Posterior vena cava (tissue), 2 donors: ENCODE measurements at regions of chr3 and their contacts with region 1.

Region 1: DNA sequence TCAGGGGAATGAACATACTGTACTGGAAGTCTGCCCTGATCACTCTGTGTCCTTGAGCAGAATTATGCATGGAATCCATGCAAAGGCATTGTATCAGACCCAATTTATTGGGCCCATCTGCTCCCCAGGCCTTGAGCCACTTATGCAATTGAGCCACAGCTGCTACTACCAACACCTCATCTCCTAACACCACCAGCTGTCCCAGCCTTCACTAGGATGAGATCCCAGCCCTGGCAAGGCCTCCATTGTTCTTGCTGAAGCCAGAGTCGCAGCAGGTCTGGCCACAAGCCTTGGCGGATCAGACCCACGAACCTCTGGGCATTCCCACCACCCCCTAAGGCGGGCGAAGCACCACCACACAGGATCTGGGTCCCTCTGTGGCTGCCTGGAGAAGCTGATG is 9.2 kb upstream of the NME9 start:
- DNase-seq: no peak

Region 2: DNA sequence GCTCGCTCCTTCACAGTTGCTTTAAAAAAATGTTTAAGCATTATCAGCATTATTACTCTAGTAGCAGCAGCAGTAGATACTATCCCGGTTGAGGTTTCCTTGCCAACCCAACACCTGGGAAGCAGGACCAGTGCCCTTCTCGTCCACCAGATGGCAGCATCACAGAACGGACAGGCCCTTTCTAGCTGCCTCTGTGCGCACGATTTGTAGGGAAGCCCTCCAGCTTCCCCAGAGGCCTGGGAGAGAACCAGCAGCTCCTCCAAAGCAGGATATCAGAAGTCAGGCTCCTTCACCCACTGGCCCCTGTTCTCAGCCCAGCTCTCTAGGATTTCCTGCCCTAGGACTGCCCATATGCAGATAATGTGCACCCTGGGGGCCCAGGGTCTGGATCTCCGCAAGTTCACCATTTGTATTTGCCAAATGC is 78.8 kb after region 1 on chr3:
- intact Hi-C with region 1: loop called (anchors 5 to 10 kb)
- DNase-seq: peak; percentile 90

Region 3: DNA sequence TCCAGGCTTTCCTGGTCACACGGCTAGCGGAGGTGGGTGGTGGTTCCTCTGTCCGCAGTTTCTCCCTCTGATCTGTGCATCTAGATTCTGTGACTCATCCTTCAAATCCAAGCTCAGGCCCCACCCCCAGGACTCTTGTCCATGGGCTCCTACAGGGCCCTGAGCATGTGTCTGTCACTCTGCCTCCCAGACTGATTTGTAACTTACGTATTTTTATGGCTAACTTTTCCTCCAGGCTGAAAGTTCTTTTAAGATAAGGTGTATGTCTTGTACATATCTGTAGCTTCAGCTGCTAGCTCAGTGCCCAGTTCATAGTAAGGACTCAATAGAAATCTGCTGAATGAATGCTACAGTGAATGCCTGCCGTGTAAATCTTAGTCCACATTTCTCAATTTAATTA is 103.6 kb after region 1 on chr3:
- intact Hi-C with region 1: no loop called
- DNase-seq: peak; percentile 35